Gastrocnemius medialis (tissue), 4 donors: ENCODE measurements at regions of chr3 and their contacts with region 1.

Region 1: GRCh38 chr3:192275741-192276355 is 451.5 kb downstream of the FGF12 start:
- DNase-seq: no peak
- ATAC-seq: no peak
- H3K4me3 ChIP-seq: no peak overlapping the region
- H3K27ac ChIP-seq: no peak overlapping the region
- H3K4me1 ChIP-seq: no peaks in the 10 kb centered on the region
- H3K27me3 ChIP-seq: no peaks in the 10 kb centered on the region
- CTCF ChIP-seq: no peak
- POLR2A ChIP-seq: no peak

Region 2: DNA sequence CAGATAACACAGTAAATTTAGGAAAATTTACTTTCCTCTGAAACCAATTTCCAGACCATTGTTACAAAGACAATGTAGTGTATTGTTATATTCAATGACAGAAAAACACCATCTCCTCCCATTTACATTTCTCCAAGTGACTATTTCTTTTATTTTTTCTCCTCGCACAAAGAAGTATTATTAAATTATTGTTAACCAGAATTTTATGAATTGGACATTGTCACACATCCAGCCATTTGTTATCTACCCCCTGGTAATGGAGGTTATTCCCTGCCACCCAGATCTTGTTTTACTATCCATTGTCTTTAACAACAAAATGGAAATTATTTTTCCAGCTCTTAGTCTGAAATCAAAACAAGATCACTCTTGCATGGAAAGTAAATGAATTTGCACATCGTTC is 59.8 kb before region 1 on chr3:
- in situ Hi-C with region 1: loop called in 1 of 4 experiments (anchors 5 kb)
- intact Hi-C with region 1: no loop called
- DNase-seq: no peak
- ATAC-seq: no peak
- H3K4me3 ChIP-seq: no peak overlapping the region
- H3K27ac ChIP-seq: no peak overlapping the region
- H3K4me1 ChIP-seq: no peaks in the 10 kb centered on the region
- H3K27me3 ChIP-seq: no peaks in the 10 kb centered on the region
- CTCF ChIP-seq: no peak
- POLR2A ChIP-seq: no peak

Region 3: GRCh38 chr3:192382861-192383260 is 107.0 kb after region 1 on chr3:
- in situ Hi-C with region 1: loop called in 1 of 4 experiments (anchors 25 kb)
- intact Hi-C with region 1: no loop called
- DNase-seq: no peak
- ATAC-seq: no peak
- H3K4me3 ChIP-seq: no peak overlapping the region
- H3K27ac ChIP-seq: no peak overlapping the region
- H3K4me1 ChIP-seq: no peaks in the 10 kb centered on the region
- H3K27me3 ChIP-seq: no peaks in the 10 kb centered on the region
- CTCF ChIP-seq: no peak
- POLR2A ChIP-seq: no peak